Natural killer cell (primary cell): ENCODE measurements at regions of chr17 and their contacts with region 1.

Region 1: DNA sequence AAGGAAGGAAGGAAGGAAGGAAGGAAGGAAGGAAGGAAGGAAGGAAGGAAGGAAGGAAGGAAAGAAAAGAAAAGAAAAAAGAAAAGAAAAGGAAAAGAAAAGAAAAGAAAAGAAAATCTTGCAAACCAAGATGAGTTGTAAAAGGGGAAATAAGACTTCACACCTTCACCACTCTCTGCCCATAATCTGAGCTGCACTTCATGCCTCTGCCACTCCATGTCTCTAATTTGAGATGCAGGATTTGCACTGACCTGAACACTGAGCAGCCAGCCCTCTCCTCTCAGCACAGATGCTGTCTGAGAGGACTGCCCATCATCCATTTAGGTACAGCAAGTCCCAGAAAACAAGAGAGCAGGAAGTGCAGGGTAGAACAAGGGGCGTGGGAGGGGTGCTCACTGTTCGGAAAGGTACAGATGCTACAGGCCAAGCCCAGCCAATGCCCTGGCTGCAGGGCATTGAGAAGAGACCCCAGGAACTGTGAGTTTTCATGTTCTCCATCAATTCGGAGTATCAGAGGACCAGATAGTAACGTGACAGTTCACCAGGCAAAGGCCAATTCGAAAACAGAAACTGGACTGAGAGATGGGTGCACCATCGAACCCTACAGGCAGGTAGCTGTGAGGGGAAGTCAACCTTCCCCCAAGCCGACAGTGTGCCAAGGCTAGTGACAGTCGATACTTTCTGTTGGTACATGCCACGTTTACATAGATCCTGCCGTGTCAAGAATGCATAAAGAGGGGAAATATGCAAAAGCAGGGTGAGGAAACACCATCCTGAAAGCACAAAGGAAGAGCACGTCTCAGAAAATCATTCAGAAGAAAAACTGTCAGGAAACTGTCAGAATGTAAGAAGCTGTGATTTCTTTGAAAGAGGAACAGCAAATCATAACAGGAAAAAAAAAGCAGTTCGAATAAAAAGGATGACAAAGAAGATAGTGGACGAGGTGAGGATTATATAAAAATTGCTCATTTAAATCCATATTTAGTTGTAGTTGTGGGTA is 142.0 kb upstream of the RCVRN start:
- DNase-seq: peak; percentile 20 to 42
- ATAC-seq: peak; percentile 72 to 80 (median 79)
- H3K4me3 ChIP-seq: no peak overlapping the region
- H3K4me3 Mint-ChIP-seq: peak overlapping the region; percentile 85
- H3K27ac ChIP-seq: peak overlapping the region; percentile 32
- H3K27ac Mint-ChIP-seq: peak overlapping the region; percentile 80 to 87
- H3K4me1 ChIP-seq: peaks cover 49% of the 10 kb centered on the region
- H3K4me1 Mint-ChIP-seq: peaks cover 76 to 83% of the 10 kb centered on the region in 2 donors
- H3K27me3 ChIP-seq: no peaks in the 10 kb centered on the region
- H3K27me3 Mint-ChIP-seq: no peaks in the 10 kb centered on the region
- CTCF ChIP-seq: peak; percentile 12

Region 2: GRCh38 chr17:10059369-10060211 is 12.5 kb after region 1 on chr17:
- intact Hi-C with region 1: loop called (anchors 2 kb)
- DNase-seq: peak; percentile 33 to 61
- ATAC-seq: peak; percentile 15 to 58 (median 51)
- H3K4me3 ChIP-seq: no peak overlapping the region
- H3K4me3 Mint-ChIP-seq: no peak overlapping the region
- H3K27ac ChIP-seq: peak overlapping the region; percentile 66
- H3K27ac Mint-ChIP-seq: peak overlapping the region; percentile 59 to 88
- H3K4me1 ChIP-seq: peaks cover 64% of the 10 kb centered on the region
- H3K4me1 Mint-ChIP-seq: peaks cover 54 to 68% of the 10 kb centered on the region in 2 donors
- H3K27me3 ChIP-seq: no peaks in the 10 kb centered on the region
- H3K27me3 Mint-ChIP-seq: no peaks in the 10 kb centered on the region
- CTCF ChIP-seq: no peak